PC-3 (cell line): ENCODE measurements at regions of chr6 and their contacts with region 1.

Region 1: DNA sequence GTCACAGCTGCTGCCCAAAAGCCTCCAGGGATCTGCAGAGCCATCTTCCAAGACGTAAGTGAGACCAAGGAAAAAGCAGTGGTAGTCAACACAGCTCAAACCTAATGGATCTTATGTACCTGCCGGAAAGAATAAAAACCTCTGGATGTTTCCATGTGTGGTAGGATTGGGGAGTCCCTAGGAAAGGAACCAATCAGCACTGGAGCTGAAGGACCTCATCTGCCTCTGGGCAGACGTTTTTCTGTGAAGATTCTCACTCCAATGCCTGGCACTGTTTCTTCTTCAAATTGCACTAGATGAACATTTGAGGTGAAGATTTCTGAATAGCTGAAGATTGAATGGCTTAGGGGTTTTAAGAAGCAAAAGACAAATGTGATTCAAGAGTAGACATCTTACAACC is at the start of gene HLA-DQB2:
- DNase-seq: no peak
- ATAC-seq: no peak
- H3K4me3 ChIP-seq: no peak within 1 kb of the TSS
- H3K27ac ChIP-seq: no peak within 1 kb of the TSS
- H3K4me1 ChIP-seq: no peaks in the 10 kb centered on the region
- H3K27me3 ChIP-seq: peaks cover 70% of the 10 kb centered on the region
- CTCF ChIP-seq: no peak
- total RNA-seq, gene HLA-DQB2: not detected in 2 replicates

Region 2: DNA sequence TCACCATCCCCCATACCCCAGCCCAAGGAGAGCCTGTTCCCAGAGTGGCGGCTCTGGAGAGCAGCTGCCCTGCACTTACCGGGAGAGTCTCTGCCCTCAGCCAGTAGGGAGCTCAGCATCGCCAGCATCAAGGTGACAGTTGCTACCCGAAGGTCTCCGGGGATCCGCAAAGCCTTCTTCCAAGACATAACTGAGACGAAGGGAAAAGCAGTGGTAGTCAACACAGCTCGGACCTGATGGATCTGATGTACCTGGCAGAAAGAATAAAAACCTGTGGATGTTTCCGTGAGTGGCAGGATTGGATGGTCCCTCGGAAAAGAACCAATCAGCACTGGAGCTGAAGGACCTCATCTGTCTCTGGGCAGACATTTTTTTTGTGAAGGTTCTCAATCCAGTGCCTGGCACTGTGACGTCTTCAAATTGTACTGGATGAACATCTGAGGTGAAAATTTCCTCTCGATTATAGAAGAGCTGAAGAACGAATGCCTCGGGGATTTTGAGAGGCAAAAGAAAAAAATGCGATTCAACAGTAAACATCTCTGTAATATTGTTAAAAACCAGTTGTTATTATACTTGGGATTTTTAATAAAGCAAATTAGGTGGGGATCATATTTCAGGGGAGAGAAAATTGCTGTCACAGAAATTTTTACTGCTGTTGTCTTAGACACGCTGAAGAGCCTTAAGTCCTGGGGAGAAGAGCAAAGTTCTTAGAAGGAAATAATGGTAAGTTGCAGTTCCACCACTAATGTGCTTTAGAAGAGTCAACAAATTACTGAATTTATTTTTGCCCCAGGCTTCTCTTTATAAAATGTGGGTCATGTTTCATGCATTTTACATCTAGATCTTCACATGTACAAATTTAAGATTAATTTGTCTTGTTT is 96.8 kb before region 1 on chr6 and contains the start of gene HLA-DQB1:
- CTCF ChIA-PET with region 1: no interaction called
- POLR2A ChIA-PET with region 1: no interaction called
- intact Hi-C with region 1: loop called (anchors 10 kb)
- DNase-seq: peak; percentile 59
- ATAC-seq: peak; percentile 80
- H3K4me3 ChIP-seq: no peak within 1 kb of the TSS
- H3K27ac ChIP-seq: no peak within 1 kb of the TSS
- H3K4me1 ChIP-seq: no peaks in the 10 kb centered on the region
- H3K27me3 ChIP-seq: peaks cover 44% of the 10 kb centered on the region
- CTCF ChIP-seq: no peak
- total RNA-seq, gene HLA-DQB1: not detected in 2 replicates

Region 3: DNA sequence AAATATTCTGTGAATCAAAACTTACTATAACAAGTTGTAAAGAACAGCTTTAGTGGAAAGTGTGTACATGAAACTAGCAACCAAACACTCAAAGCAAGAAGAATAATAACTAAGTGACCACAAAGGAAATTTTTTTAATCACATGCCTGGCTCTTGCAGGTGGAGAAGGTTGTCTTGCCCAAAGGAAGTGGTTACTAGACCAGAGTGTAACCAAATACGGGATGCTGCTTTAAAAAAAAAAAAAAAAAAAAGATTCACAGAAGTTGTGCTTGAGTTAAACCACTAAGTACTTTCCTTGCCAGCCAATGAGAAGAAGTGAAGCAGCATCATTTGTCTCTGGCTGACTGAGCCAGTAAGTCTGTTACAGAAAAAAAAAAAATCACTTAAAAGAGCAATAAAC is 77.8 kb before region 1 on chr6:
- CTCF ChIA-PET with region 1: no interaction called
- POLR2A ChIA-PET with region 1: no interaction called
- intact Hi-C with region 1: no loop called
- DNase-seq: no peak
- ATAC-seq: no peak
- H3K4me3 ChIP-seq: no peak overlapping the region
- H3K27ac ChIP-seq: no peak overlapping the region
- H3K4me1 ChIP-seq: no peaks in the 10 kb centered on the region
- H3K27me3 ChIP-seq: peaks cover 68% of the 10 kb centered on the region
- CTCF ChIP-seq: no peak